AG04450 (cell line): ENCODE measurements at regions of chr10 and their contacts with region 1.

Region 1: DNA sequence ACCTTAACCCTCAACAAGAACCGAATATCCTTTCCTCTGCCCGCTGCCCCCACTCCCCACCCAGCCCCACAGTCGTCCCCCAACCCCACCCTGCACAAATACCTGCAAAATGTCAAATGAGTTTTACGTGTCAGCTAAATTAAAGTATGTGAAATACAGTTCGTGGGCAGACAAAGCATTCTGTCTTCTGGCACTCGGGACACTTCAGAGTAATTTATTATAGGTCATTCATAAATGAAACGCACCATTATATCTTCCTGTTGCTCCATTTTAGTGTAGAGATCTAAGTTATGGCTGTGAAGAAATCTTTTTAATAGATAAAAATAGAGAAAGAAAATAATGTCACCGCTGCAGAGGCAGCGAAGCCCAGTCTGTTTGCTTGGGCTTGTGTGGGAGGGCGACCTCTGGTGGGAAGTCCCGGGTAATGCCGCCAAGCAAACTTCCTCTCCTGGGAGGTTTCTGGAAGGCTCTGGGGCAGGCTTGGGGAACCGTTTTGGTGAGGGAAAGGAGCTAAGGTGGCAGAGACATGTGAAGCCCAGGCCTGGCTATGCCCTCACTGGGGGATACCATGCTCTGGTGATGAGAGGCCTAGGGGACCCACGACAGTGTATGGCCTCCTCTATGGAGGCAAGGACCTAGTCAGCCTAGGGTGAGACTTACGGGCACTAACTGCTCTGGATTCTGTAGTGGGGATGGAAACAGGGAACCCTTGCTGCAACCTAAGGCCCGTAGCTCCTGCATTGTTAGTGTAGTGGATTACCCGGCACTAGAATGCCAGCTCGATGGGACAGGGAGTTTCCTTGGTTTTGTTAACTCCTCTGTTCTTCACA is 604.9 kb downstream of the LRMDA start:
- DNase-seq: peak; percentile 32
- H3K4me3 ChIP-seq: no peak overlapping the region
- H3K27ac ChIP-seq: no peak overlapping the region
- H3K27me3 ChIP-seq: peaks cover 7% of the 10 kb centered on the region
- CTCF ChIP-seq: peak; percentile 97

Region 2: DNA sequence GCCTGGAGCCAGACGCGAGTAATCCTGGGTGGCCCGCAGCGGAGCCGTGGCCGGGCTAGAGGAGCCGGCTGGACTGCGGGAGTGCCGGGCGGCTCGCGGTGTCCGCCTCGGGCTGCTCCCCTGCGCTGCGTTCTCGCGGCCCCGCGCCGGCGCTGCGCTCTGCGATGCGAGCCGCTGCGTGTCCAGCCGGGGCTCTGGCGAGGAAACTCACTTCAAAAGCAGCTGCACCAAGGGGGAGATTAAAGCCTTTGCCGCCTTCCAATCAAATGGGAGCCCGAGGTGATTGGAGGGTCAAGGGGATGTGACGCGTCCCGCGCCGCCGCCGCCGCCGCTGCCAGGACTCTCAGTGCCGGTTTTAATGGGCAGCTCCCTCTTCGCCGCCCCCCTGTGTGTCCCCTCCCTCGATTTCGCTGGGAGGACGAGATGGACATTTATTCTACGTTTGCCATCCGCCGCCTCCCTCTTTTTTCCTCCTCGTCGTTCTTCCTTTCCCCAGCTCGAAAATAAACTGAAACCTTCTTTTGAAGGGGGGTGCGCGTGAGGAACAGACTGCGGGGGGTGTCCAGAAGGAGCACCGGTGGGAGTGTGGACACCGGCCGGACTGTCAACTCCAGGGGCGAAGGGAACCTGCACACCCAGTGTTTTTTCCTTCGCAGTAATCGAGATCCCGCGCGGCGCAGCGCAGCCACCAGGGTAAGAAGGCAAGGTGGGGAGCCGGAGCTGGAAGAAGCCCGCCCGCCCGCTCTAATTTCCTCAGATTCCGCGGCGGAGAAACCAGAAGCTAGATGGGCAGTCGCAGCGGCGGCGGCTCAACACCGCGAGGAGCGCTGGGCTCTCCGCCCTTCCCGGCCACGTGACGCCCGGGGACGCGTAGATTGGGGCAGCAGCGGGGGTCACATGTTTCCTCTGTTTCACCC is 634.5 kb before region 1 on chr10 and contains the start of gene ZNF503:
- CTCF ChIA-PET with region 1: interaction called, 13 read pairs
- POLR2A ChIA-PET with region 1: no interaction called
- DNase-seq: peak; percentile 95
- H3K4me3 ChIP-seq: peak within 1 kb of the TSS; percentile 100
- H3K27ac ChIP-seq: peak within 1 kb of the TSS; percentile 93
- H3K27me3 ChIP-seq: peaks cover 38% of the 10 kb centered on the region
- CTCF ChIP-seq: no peak; the same call in 1 of the 2 replicates
- polyA plus RNA-seq, gene ZNF503: 2.5 and 3.3 TPM in 2 replicates

Region 3: GRCh38 chr10:75542906-75543305 is 493.4 kb before region 1 on chr10:
- CTCF ChIA-PET with region 1: no interaction called
- POLR2A ChIA-PET with region 1: no interaction called
- DNase-seq: no peak
- H3K4me3 ChIP-seq: no peak overlapping the region
- H3K27ac ChIP-seq: no peak overlapping the region
- H3K27me3 ChIP-seq: no peaks in the 10 kb centered on the region
- CTCF ChIP-seq: no peak

Region 4: DNA sequence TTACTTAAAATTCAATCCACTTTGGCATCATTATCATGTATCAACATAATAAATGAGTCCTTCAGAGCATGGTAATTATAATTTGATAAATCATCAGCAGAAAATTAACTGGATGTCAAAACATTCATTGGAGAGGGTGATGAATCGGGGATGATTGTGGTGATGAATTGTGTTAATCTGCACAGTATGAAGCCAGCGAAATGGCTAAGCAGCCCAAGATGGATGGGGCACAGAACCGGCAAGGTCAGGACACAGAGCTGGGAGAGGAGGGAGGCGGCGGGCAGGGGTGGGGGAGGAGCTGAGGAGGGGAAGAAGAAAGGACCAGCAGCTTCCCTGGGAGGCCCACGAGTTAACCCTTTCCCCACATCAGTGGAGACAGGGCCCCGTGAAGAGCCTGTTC is 68.8 kb before region 1 on chr10:
- CTCF ChIA-PET with region 1: no interaction called
- POLR2A ChIA-PET with region 1: no interaction called
- DNase-seq: no peak
- H3K4me3 ChIP-seq: no peak overlapping the region
- H3K27ac ChIP-seq: no peak overlapping the region
- H3K27me3 ChIP-seq: peaks cover 10% of the 10 kb centered on the region
- CTCF ChIP-seq: no peak

Region 5: GRCh38 chr10:76051007-76051936 is 14.9 kb after region 1 on chr10:
- CTCF ChIA-PET with region 1: interaction called, 26 read pairs
- POLR2A ChIA-PET with region 1: no interaction called
- DNase-seq: no peak
- H3K4me3 ChIP-seq: no peak overlapping the region
- H3K27ac ChIP-seq: no peak overlapping the region
- H3K27me3 ChIP-seq: peaks cover 23% of the 10 kb centered on the region
- CTCF ChIP-seq: no peak

Region 6: GRCh38 chr10:76066457-76066856 is 30.1 kb after region 1 on chr10:
- CTCF ChIA-PET with region 1: interaction called, 10 read pairs
- POLR2A ChIA-PET with region 1: no interaction called
- DNase-seq: no peak
- H3K4me3 ChIP-seq: no peak overlapping the region
- H3K27ac ChIP-seq: no peak overlapping the region
- H3K27me3 ChIP-seq: peaks cover 13% of the 10 kb centered on the region
- CTCF ChIP-seq: no peak

Region 7: DNA sequence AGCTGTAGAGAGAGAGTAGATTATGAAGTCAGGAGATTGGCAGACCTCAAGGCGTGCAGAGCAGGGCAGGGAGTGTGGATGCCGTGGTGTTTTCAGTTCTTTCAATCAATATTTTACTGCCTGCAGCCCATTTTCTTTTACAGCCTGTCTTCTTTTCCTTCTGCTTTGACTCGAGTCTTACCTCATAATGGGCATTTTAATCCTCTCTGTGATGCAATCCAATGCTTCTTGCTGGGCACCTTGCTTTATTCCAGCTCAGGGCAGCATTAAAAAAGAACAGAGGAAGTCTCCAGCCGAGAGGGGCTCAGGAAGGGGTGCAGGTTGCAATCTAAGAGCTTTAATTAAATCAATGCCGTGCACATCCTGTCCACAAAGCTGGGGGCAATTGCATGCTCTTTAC is 234.1 kb after region 1 on chr10:
- CTCF ChIA-PET with region 1: no interaction called
- POLR2A ChIA-PET with region 1: no interaction called
- DNase-seq: no peak
- H3K4me3 ChIP-seq: no peak overlapping the region
- H3K27ac ChIP-seq: no peak overlapping the region
- H3K27me3 ChIP-seq: no peaks in the 10 kb centered on the region
- CTCF ChIP-seq: no peak